IMR-90 (cell line): ENCODE measurements at regions of chr21 and their contacts with region 1.

Region 1: DNA sequence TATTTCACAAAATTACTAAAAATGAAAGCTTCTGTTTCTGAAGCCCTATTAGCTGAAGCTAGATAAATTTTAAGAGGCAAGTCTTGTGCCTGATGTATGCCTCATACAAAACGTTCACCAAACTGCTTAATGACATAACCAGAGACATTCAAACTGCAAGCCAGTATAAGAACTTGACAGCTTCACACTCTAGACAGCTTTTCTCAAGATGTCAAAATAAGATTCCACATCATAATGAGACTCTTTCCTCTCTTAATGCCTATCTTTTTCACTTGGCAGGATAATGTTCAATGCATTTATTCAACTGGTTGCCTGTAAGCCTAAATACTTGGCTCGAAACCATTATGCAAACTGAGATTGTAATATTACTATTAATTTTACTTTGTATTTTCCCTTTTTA is 424.0 kb downstream of the LTN1 start:
- DNase-seq: no peak
- ATAC-seq: no peak
- H3K4me3 ChIP-seq: no peak overlapping the region
- H3K27ac ChIP-seq: no peak overlapping the region
- H3K4me1 ChIP-seq: no peaks in the 10 kb centered on the region
- H3K27me3 ChIP-seq: no peaks in the 10 kb centered on the region
- CTCF ChIP-seq: no peak
- POLR2A ChIP-seq: no peak
- RAD21 ChIP-seq: no peak

Region 2: GRCh38 chr21:28644762-28645161 is 76.1 kb after region 1 on chr21:
- CTCF ChIA-PET with region 1: no interaction called
- POLR2A ChIA-PET with region 1: interaction called, 10 read pairs
- dilution Hi-C with region 1: no loop called
- in situ Hi-C with region 1: no loop called
- intact Hi-C with region 1: no loop called
- DNase-seq: no peak
- ATAC-seq: peak; percentile 42
- H3K4me3 ChIP-seq: no peak overlapping the region
- H3K27ac ChIP-seq: no peak overlapping the region
- H3K4me1 ChIP-seq: peaks cover 3% of the 10 kb centered on the region; the same call in 1 of the 2 replicates
- H3K27me3 ChIP-seq: no peaks in the 10 kb centered on the region
- CTCF ChIP-seq: no peak
- POLR2A ChIP-seq: no peak
- RAD21 ChIP-seq: no peak

Region 3: GRCh38 chr21:28745131-28746016 is 176.7 kb after region 1 on chr21:
- CTCF ChIA-PET with region 1: no interaction called
- POLR2A ChIA-PET with region 1: no interaction called
- dilution Hi-C with region 1: no loop called
- in situ Hi-C with region 1: no loop called
- intact Hi-C with region 1: no loop called
- DNase-seq: peak; percentile 94
- ATAC-seq: peak; percentile 82
- H3K4me3 ChIP-seq: peak overlapping the region; percentile 38; the same call in 1 of the 2 replicates
- H3K27ac ChIP-seq: peak overlapping the region; percentile 93
- H3K4me1 ChIP-seq: peaks cover 6% of the 10 kb centered on the region
- H3K27me3 ChIP-seq: no peaks in the 10 kb centered on the region
- CTCF ChIP-seq: peak; percentile 99
- POLR2A ChIP-seq: peak; percentile 60
- RAD21 ChIP-seq: peak; percentile 100

Region 4: DNA sequence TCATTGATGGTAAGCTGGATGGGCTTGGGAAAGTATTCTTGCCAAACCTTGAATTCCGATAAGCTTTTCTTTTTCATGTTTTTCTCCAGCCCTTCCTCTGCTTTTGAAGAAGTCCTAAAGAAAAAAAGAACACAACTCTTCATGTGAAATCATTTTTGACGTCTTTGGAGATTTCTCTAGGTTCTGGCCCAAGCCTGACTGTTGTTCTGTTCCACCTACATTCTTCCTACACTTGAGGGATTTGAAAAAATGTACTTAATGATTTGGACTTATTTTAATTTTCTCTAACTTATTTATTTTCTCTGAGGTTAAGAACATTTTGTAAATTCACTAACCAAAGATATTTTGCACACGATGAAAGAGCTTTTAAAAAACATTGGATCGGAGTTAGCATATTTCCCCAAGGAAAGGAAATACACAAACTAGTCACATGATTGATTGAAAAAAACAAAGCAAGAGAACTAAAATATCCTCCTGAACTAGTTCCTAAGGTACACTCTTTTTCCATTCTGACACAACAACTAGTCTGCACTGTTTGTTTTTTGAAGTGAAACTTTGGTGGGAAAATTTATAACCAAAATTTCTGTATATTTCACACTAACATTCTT is 341.7 kb after region 1 on chr21:
- CTCF ChIA-PET with region 1: no interaction called
- POLR2A ChIA-PET with region 1: no interaction called
- dilution Hi-C with region 1: no loop called
- in situ Hi-C with region 1: no loop called
- intact Hi-C with region 1: loop called (anchors 5 kb)
- DNase-seq: no peak
- ATAC-seq: no peak
- H3K4me3 ChIP-seq: no peak overlapping the region
- H3K27ac ChIP-seq: no peak overlapping the region
- H3K4me1 ChIP-seq: no peaks in the 10 kb centered on the region
- H3K27me3 ChIP-seq: no peaks in the 10 kb centered on the region
- CTCF ChIP-seq: no peak
- POLR2A ChIP-seq: no peak
- RAD21 ChIP-seq: no peak